IMR-90 (cell line): ENCODE measurements at regions of chr1 and their contacts with region 1.

Region 1: GRCh38 chr1:52153010-52153409 is 11.1 kb downstream of the ZFYVE9 start:
- DNase-seq: peak; percentile 47
- ATAC-seq: peak; percentile 48
- H3K4me3 ChIP-seq: no peak overlapping the region
- H3K27ac ChIP-seq: no peak overlapping the region
- H3K4me1 ChIP-seq: peaks cover 3% of the 10 kb centered on the region
- H3K27me3 ChIP-seq: no peaks in the 10 kb centered on the region
- CTCF ChIP-seq: no peak
- POLR2A ChIP-seq: no peak
- RAD21 ChIP-seq: no peak

Region 2: GRCh38 chr1:51636764-51637522 is 516.1 kb before region 1 on chr1:
- CTCF ChIA-PET with region 1: no interaction called
- POLR2A ChIA-PET with region 1: no interaction called
- dilution Hi-C with region 1: no loop called
- in situ Hi-C with region 1: no loop called
- intact Hi-C with region 1: no loop called
- DNase-seq: peak; percentile 91
- ATAC-seq: peak; percentile 97
- H3K4me3 ChIP-seq: no peak overlapping the region
- H3K27ac ChIP-seq: no peak overlapping the region; the same call in none of the 2 replicates
- H3K4me1 ChIP-seq: peaks cover 9% of the 10 kb centered on the region; the same call in 1 of the 2 replicates
- H3K27me3 ChIP-seq: no peaks in the 10 kb centered on the region
- CTCF ChIP-seq: no peak
- POLR2A ChIP-seq: peak; percentile 16; the same call in 1 of the 2 replicates
- RAD21 ChIP-seq: peak; percentile 30

Region 3: GRCh38 chr1:53014791-53015507 is 861.9 kb after region 1 on chr1:
- CTCF ChIA-PET with region 1: no interaction called
- POLR2A ChIA-PET with region 1: interaction called, 10 read pairs
- dilution Hi-C with region 1: no loop called
- in situ Hi-C with region 1: no loop called
- intact Hi-C with region 1: no loop called
- DNase-seq: peak; percentile 91
- ATAC-seq: peak; percentile 95
- H3K4me3 ChIP-seq: peak overlapping the region; percentile 51
- H3K27ac ChIP-seq: peak overlapping the region; percentile 21
- H3K4me1 ChIP-seq: no peaks in the 10 kb centered on the region
- H3K27me3 ChIP-seq: no peaks in the 10 kb centered on the region
- CTCF ChIP-seq: no peak
- POLR2A ChIP-seq: no peak
- RAD21 ChIP-seq: peak; percentile 37